ENCODE measurements at regions of chr3 and their contacts with region 1.

Region 1: DNA sequence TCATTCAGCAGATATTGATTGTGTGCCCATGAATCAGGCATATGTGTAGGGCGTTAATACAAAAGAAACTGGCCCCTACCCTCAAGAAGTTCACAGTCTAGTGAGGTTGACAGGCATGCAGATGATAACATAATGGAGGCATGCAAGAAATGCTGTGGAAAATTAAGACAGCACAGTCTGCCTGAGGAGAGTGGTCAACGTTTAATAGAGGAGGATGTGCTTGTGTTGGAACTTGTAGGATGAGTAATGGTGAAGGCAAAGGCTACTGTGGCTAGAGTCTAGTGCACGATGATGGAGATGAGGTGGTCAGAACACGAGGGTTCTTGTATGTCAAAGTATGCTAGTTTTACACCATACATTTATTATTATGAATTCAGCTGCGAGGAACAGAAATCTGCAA is 295.7 kb downstream of the SOX2 start:
- DNase-seq: no peak
- ATAC-seq: no peak
- H3K4me3 ChIP-seq: no peak overlapping the region
- H3K4me3 Mint-ChIP-seq: no peak overlapping the region
- H3K27ac ChIP-seq: no peak overlapping the region
- H3K27ac Mint-ChIP-seq: no peak overlapping the region
- H3K4me1 ChIP-seq: no peaks in the 10 kb centered on the region
- H3K4me1 Mint-ChIP-seq: no peaks in the 10 kb centered on the region
- H3K27me3 ChIP-seq: no peaks in the 10 kb centered on the region
- H3K27me3 Mint-ChIP-seq: no peaks in the 10 kb centered on the region
- CTCF ChIP-seq: no peak

Region 2: GRCh38 chr3:181966005-181966792 is 41.2 kb before region 1 on chr3:
- CTCF ChIA-PET with region 1: no interaction called
- POLR2A ChIA-PET with region 1: no interaction called
- intact Hi-C with region 1: loop called (anchors 2 kb)
- DNase-seq: no peak
- ATAC-seq: no peak
- H3K4me3 ChIP-seq: no peak overlapping the region
- H3K4me3 Mint-ChIP-seq: no peak overlapping the region
- H3K27ac ChIP-seq: no peak overlapping the region
- H3K27ac Mint-ChIP-seq: no peak overlapping the region
- H3K4me1 ChIP-seq: no peaks in the 10 kb centered on the region
- H3K4me1 Mint-ChIP-seq: no peaks in the 10 kb centered on the region
- H3K27me3 ChIP-seq: no peaks in the 10 kb centered on the region
- H3K27me3 Mint-ChIP-seq: peaks cover 7% of the 10 kb centered on the region
- CTCF ChIP-seq: no peak

Measured in B cell (primary cell).